Right ventricle myocardium superior (tissue), 1 donor: ENCODE measurements at regions of chr2 and their contacts with region 1.

Region 1: DNA sequence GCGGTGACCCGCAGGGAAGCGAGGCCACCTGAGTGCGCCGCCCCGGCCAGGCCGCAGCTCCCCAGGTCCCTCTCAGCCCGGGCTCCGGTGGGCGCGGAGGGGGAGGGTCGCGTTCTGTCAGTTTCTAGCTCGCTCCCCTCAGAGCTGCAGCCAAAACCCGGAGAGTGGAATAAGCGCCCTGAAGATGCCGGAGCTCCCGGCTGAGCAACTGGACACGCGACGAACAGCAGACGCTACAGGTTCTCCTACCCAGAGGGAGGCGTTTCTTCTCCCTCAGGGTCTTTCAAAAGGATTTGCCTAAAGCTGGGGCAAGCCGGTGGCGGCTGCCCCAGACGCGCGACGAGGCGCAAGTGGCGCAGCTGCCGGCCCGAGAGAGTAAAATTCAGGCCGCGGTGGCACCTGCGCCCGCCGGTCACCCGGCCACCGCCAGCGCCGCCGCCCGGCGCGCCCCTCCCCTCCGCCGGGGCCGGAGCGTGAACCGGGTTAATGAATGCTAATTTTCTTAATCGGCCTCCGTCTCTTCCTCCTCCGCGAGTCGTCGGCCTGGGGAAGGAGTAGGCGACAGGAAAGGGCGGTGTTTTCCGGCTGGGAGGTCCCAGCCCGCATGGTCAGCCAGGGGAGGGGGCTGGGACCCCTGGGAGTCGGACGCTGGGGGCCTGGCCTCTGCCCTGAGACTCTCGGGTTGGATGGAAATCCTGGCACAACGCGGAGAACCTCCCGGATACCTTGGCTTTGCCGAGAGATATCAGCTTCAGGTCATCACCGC is 845 bp upstream of the CDC42EP3 start:
- DNase-seq: peak; percentile 77
- ATAC-seq: peak; percentile 61

Region 2: DNA sequence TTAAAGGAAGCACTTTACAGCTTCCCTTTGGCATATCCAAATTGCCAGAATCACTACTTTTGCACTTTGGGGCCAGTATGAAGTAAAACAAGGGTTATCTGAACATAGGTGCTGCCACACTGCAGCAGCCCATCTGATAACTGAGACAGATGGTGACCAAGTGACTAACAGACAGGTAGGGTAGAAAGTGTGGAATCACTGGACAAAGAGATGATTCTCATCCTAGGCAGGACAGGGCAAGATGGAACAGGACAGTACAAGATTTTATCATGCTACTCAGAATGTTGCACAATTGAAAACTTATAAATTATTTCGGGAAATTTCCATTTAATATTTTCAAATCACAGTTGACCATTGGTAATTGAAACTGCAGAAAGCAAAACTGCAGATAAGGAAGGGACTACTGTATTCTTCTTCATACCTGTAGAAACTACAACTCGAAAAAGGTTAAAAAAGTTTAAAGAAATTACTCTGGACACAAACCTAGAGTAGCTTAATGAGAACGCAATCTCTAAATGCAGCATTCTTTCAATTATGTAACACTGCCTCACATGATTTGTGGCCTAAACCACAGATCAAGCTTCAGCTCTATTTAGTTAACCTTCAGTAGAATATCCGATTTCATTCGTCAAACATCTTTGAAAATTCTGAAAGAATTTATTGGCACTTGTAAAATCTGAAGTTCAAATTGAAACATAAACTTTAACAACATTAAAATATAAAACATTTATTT is 619.5 kb before region 1 on chr2:
- intact Hi-C with region 1: no loop called
- DNase-seq: no peak
- ATAC-seq: no peak

Region 3: GRCh38 chr2:37809525-37809924 is 137.2 kb after region 1 on chr2:
- intact Hi-C with region 1: loop called (anchors 10 kb)
- DNase-seq: peak; percentile 48
- ATAC-seq: peak; percentile 63

Region 4: DNA sequence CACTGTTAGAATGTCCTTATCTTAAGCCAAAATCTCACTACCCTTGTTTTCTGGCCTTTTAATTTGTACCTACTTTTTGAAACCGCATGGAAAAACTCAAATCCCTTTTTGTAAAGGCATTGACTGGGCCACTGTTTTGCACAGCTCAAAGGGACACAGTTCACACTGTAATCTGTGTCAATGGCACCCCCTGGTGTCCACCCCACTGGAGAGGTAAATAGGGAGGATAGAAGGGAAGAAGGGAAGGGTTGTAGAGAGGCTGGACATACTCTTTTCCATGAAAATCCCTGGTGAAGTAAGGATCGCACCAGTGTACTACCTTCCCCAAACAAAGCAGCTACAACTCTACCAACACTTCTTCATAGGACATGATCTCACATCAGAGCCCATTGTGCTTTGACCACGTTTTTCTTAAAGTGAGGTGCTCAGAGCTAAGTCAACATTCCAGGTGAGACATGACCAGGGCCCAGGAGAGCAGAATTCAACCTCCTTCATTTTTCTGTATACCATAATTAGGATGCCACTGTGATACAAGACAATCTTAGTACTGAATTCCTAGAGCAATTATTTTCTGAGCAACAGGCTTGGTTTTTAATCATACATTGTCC is 160.4 kb after region 1 on chr2:
- intact Hi-C with region 1: loop called (anchors 5 kb)
- DNase-seq: peak; percentile 89
- ATAC-seq: peak; percentile 86